ENCODE measurements at regions of chr5 and their contacts with region 1.

Region 1: GRCh38 chr5:72108202-72109061 is 1.2 kb downstream of the MAP1B start:
- DNase-seq: peak; percentile 83
- ATAC-seq: peak; percentile 81

Region 2: DNA sequence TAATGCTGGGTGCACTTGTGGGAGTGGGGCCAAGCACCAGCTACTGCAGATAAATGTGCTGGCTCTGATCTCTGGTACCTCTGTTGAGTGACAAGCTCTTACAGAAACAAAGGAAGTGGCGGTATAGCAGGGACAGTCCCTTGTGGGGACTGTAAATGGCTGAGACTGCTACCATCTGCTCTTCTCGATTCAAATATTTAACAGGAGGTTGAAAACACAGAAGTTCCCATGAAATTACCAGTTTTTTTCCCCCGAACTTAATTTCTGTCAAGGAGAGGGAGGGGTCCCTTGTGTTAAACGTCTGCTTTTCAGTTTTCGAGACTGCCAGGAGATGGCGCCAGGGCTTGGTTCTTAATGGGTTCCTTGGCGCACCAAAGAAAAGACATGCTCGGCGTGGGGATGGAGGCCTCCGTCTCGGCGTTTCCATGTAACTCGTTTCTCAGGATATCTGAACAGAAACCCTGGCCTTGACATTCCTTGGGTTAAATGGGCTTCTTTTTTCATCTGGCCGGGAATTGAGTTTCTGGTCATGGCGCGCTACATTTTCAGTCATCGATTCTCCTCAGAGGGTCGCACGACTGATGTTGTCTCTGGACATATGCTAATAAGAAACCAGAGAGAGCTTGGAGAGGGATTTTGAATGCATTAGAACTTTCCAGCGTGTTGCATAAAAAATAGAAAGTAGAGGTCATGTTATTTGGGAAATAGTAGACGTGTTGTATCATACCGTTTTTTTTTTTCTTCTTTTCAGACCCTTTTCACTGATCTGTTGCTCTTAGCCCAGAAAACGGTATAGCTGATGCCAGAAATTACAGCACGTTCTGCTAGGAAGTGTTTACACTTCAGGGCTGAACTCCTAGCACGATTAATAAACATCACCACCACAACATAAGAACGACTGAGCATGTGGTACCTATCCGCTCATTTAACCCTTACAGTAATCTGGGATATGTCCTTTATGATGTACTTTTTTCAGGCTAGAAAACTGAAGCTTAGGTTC is 325.4 kb before region 1 on chr5:
- intact Hi-C with region 1: loop called (anchors 5 kb)
- DNase-seq: peak; percentile 82
- ATAC-seq: peak; percentile 85

Region 3: GRCh38 chr5:71891856-71892255 is 216.6 kb before region 1 on chr5:
- intact Hi-C with region 1: loop called (anchors 5 kb)
- DNase-seq: peak; percentile 62
- ATAC-seq: peak; percentile 97

Region 4: GRCh38 chr5:71932655-71933338 is 175.6 kb before region 1 on chr5:
- intact Hi-C with region 1: loop called (anchors 5 kb)
- DNase-seq: no peak
- ATAC-seq: peak; percentile 72

Region 5: GRCh38 chr5:71974165-71974564 is 134.3 kb before region 1 on chr5:
- intact Hi-C with region 1: loop called (anchors 5 kb)
- DNase-seq: no peak
- ATAC-seq: peak; percentile 59